Heart right ventricle (tissue), 16 donors: ENCODE measurements at regions of chr1 and their contacts with region 1.

Region 1: GRCh38 chr1:27102707-27103491 is 52.0 kb downstream of the SLC9A1 start:
- DNase-seq: peak; percentile 75 to 85
- ATAC-seq: peak; percentile 31 to 65 (median 50)
- H3K4me3 ChIP-seq: no peak overlapping the region
- H3K27ac ChIP-seq: no peak overlapping the region
- H3K4me1 ChIP-seq: peaks cover 14 to 36% (median 26%) of the 10 kb centered on the region in 9 donors
- H3K27me3 ChIP-seq: no peaks in the 10 kb centered on the region
- CTCF ChIP-seq: peak; percentile 94 to 98 (median 97)

Region 2: GRCh38 chr1:27166351-27166802 is 63.5 kb after region 1 on chr1:
- intact Hi-C with region 1: no loop called
- DNase-seq: no peak
- ATAC-seq: no peak
- H3K4me3 ChIP-seq: no peak overlapping the region
- H3K27ac ChIP-seq: no peak overlapping the region
- H3K4me1 ChIP-seq: peaks cover 0 to 8% (median 0%) of the 10 kb centered on the region in 9 donors
- H3K27me3 ChIP-seq: no peaks in the 10 kb centered on the region
- CTCF ChIP-seq: no peak

Region 3: GRCh38 chr1:27203946-27204345 is 101.0 kb after region 1 on chr1:
- intact Hi-C with region 1: loop called in 7 of 10 experiments (anchors 2 to 5 kb)
- DNase-seq: no peak
- ATAC-seq: no peak
- H3K4me3 ChIP-seq: no peak overlapping the region
- H3K27ac ChIP-seq: no peak overlapping the region
- H3K4me1 ChIP-seq: no peaks in the 10 kb centered on the region
- H3K27me3 ChIP-seq: peaks cover 0 to 6% (median 0%) of the 10 kb centered on the region in 7 donors
- CTCF ChIP-seq: no peak